Spleen (tissue), 13 donors: ENCODE measurements at regions of chr4 and their contacts with region 1.

Region 1: DNA sequence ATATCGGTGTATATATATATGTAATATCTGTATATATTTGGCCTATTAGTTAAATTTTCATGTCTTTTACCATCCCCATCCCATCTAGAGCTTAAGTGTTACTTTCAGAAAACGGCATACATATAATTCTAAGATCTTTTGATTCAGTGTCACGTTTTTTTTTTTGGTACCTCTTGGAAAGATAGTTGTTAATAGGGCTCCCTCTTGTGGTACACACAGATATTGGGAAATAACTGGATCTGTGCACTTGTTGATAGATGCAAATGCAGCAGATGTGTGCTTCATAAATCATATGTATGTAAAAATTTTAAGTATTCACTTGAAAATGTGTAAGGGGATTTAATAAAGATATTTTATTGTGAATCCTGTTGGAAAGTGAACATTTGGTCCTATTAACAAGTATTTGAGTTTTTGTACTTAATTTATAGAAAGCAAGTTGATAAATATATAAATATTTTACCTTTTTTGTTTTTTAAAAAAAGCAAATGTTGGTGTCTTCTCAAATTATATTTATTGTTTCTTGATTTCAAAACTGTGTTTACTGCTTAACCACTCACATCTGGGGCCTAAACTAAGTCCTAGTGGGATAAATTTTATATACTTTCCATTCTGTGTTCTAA is 74.7 kb downstream of the PAQR3 start:
- DNase-seq: no peak
- H3K4me3 ChIP-seq: no peak overlapping the region
- H3K27ac ChIP-seq: peak overlapping the region in 1 of 8 donors; percentile 36
- H3K4me1 ChIP-seq: peaks cover 0 to 28% (median 8%) of the 10 kb centered on the region in 6 donors
- H3K27me3 ChIP-seq: no peaks in the 10 kb centered on the region
- CTCF ChIP-seq: peak; percentile 52 to 86 (median 77)
- POLR2A ChIP-seq: no peak

Region 2: DNA sequence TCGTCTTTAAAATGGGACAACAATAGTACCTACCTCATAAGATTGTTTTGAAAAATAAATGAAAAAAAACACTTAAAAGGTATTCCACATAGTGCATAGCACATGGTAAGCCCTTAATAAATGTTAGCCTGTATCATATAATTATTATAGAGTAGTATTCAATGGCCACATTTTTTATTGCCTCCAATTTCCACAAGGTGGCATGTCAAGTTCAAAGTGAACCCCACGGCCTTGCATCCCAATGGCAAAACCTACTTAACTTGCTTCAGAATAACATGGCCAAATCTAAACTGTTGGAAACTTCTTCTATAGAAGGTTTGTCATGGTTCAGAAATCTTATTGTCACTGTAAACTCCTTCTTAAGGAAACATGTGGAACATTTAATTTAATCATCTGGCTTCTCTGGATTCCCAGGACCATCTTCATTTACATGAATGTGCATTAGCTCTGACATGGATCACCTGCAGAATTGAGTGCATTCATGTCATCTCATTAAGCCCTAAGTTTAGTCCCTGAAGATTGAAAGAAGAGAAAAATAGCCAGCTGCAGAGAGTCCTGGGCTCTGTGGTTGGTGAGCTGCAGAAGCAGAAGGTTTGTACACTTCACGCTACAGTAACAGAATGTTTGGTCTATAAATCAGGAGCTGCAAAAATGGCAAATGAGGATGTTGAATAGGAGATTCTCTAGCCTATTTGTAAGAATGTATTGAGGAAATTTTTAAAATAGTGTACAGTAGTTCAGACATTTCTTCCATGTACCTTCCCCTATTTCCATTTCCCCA is 251.9 kb before region 1 on chr4:
- intact Hi-C with region 1: loop called (anchors 10 kb)
- DNase-seq: no peak
- H3K4me3 ChIP-seq: no peak overlapping the region
- H3K27ac ChIP-seq: peak overlapping the region in 4 of 8 donors; percentile 49 to 78 (median 57)
- H3K4me1 ChIP-seq: peaks cover 15 to 58% (median 48%) of the 10 kb centered on the region in 6 donors
- H3K27me3 ChIP-seq: no peaks in the 10 kb centered on the region
- CTCF ChIP-seq: peak in 10 of 11 experiments; percentile 36 to 66 (median 58)
- POLR2A ChIP-seq: no peak